ENCODE measurements at regions of chr9 and their contacts with region 1.

Region 1: GRCh38 chr9:120875954-120876841 is 790 bp downstream of the PHF19 start:
- DNase-seq: peak; percentile 95
- H3K4me3 ChIP-seq: peak overlapping the region; percentile 93
- H3K27ac ChIP-seq: peak overlapping the region; percentile 96
- H3K4me1 ChIP-seq: peaks cover 70% of the 10 kb centered on the region
- CTCF ChIP-seq: peak; percentile 58

Region 2: DNA sequence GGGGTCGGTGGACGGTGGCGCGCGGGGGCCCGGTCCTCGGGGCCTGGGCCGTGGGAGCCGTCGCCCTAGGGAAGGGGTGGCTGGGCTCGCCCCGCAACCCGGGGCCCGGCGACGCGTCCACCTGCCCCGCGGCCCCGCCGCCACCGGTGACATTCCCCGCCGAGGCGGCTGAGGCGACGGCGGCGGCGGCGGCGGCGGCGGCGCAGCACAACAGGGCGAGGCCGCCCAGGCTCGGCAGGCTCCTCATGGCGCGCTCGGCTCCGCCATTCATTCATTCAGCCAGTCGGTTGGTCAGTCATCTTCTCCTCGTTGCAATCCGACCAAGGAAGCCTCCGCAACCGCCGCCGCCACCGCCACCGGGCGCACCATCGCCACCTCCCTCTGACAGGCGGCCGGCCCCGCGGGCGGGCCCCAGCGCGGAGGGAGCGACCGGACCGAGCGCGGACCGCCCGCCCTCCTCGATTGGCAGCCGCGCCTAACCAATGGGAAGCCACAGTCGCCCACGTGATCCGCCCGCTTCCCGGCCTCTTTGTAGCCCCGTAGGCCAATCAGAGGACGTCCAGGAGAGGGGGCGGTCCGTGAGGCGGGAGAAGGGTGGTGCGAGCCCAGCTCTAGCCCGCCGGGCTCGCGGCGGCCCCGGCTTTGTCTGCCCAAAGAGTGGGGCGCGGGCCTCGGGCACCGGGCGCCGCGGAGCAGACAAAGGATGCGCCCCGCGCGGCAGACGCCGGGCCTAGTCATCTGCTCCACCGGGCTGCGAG is 161.9 kb before region 1 on chr9 and contains the start of gene MEGF9:
- CTCF ChIA-PET with region 1: no interaction called
- POLR2A ChIA-PET with region 1: no interaction called
- intact Hi-C with region 1: no loop called
- DNase-seq: peak; percentile 98
- H3K4me3 ChIP-seq: peak within 1 kb of the TSS; percentile 86
- H3K27ac ChIP-seq: peak within 1 kb of the TSS; percentile 33
- H3K4me1 ChIP-seq: peaks cover 38% of the 10 kb centered on the region
- CTCF ChIP-seq: no peak
- total RNA-seq, gene MEGF9: 4.8 and 5.1 TPM in 2 replicates

Region 3: DNA sequence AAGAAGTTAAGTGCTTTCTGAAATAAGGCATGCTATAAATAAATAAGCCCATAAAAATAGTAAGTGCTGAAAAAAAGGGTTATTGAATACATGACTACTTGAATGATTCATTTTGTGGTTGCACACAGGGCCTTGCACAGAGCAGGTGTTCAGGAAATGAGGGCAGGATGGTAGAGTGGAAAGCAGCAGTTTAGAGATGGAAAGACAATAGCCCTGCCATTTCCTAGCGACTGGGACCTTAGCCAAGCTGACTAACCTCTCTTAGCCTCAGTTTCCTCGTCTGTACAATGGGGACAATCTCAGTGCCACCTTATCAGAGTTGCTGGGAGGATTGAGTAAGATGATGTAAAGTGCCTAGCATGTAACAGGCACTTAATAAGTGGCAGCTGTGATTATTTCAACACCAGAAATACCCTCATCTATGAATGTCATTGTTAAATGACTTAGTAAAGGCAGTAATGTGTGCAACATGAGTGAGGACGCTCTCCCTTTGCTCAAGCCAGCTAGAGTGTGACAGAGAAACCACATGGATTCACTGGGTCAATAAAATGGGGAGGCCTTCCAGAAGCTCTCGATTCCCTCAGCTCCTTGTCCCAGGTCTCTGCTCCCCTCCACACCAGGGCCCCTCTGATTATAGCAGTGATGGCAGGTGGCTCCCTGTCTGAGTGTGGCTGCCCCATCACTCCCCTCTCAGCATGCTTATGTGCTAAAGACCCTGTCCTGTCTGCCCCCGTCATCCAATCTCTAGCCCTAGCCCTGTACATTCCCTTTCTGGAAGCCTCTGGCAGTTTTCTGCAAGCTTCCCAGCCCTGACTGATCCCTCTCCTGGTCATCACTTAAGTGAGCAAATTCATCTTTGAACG is 16.8 kb after region 1 on chr9:
- CTCF ChIA-PET with region 1: no interaction called
- POLR2A ChIA-PET with region 1: interaction called, 50 read pairs
- intact Hi-C with region 1: loop called (anchors 1 kb)
- DNase-seq: peak; percentile 97
- H3K4me3 ChIP-seq: peak overlapping the region; percentile 7
- H3K27ac ChIP-seq: peak overlapping the region; percentile 98
- H3K4me1 ChIP-seq: peaks cover 95% of the 10 kb centered on the region
- CTCF ChIP-seq: no peak

Region 4: GRCh38 chr9:120904061-120904977 is 28.1 kb after region 1 on chr9:
- CTCF ChIA-PET with region 1: interaction called, 3 read pairs
- POLR2A ChIA-PET with region 1: interaction called, 12 read pairs
- intact Hi-C with region 1: loop called (anchors 1 kb)
- DNase-seq: peak; percentile 89
- H3K4me3 ChIP-seq: peak overlapping the region; percentile 21
- H3K27ac ChIP-seq: peak overlapping the region; percentile 97
- H3K4me1 ChIP-seq: peaks cover 76% of the 10 kb centered on the region
- CTCF ChIP-seq: no peak

Region 5: GRCh38 chr9:120928483-120929228 is 52.5 kb after region 1 on chr9:
- CTCF ChIA-PET with region 1: no interaction called
- POLR2A ChIA-PET with region 1: interaction called, 7 read pairs
- intact Hi-C with region 1: loop called (anchors 1 kb)
- DNase-seq: peak; percentile 87
- H3K4me3 ChIP-seq: peak overlapping the region; percentile 74
- H3K27ac ChIP-seq: peak overlapping the region; percentile 96
- H3K4me1 ChIP-seq: peaks cover 97% of the 10 kb centered on the region
- CTCF ChIP-seq: no peak

Region 6: GRCh38 chr9:120936011-120936763 is 60.0 kb after region 1 on chr9:
- CTCF ChIA-PET with region 1: interaction called, 3 read pairs
- POLR2A ChIA-PET with region 1: interaction called, 7 read pairs
- intact Hi-C with region 1: loop called (anchors 1 kb)
- DNase-seq: peak; percentile 92
- H3K4me3 ChIP-seq: peak overlapping the region; percentile 49
- H3K27ac ChIP-seq: peak overlapping the region; percentile 96
- H3K4me1 ChIP-seq: peaks cover 81% of the 10 kb centered on the region
- CTCF ChIP-seq: peak; percentile 100

Region 7: DNA sequence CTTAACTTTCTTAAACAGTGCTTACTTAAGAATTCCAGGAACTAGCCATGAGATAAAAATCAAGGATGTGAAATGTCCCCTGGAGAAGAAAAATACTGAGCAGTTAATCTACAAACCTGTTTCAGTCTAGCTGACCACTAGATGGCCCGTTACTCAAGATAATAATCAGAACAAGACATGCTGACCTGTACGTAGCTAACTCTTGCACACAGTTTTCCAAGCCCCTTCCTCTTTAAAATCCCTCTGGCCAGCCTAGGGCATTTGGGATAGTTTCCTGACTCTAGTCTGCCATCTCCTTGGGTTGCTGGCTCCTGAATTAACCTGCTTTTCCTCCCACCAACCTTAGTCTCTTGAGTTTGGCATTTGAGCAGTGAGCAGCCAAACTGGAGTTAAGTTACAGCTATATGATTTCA is 109.6 kb after region 1 on chr9:
- CTCF ChIA-PET with region 1: no interaction called
- POLR2A ChIA-PET with region 1: no interaction called
- intact Hi-C with region 1: loop called (anchors 5 kb)
- DNase-seq: peak; percentile 76
- H3K4me3 ChIP-seq: no peak overlapping the region
- H3K27ac ChIP-seq: no peak overlapping the region
- H3K4me1 ChIP-seq: no peaks in the 10 kb centered on the region
- CTCF ChIP-seq: peak; percentile 89

Region 8: DNA sequence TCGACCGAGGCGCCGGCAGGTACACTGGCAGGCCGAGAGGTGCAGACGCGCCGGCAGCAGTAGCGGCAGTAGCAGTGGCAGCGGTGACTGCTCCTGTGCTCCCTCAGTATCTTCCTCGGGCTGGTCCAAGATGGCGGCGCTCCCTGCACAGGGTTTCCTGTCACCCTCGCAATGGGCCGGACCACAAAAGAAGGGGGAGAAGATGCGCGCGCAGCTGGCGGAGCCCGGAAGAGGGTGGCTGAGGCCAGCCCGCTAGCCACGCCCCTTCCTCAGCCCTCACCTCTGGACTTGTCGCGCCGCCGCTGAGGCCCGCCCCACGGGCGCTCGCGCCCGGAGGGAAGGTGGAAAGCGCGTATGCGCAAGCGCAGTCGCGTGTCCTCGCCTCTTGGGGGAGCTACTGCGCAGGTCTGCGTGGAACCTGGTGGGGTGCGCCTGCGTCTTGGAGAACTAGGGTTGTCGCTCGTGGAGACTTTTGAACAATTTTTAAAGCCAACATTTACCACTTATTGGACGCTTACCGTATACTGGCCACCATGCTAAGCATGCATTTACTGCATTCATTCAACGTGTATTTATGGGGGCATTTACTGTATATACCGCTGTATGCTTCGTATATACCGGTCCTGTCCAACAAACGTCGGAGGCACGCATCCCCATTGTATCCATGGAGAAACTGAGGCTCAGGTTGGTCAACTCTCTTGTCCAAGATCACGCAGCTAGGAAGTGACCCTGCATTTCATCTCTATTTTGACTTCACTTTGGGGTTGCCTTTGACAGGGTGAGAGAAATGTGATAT is 325.7 kb after region 1 on chr9 and contains the start of gene RAB14:
- CTCF ChIA-PET with region 1: no interaction called
- POLR2A ChIA-PET with region 1: no interaction called
- intact Hi-C with region 1: loop called (anchors 5 kb)
- DNase-seq: peak; percentile 99
- H3K4me3 ChIP-seq: peak within 1 kb of the TSS; percentile 99
- H3K27ac ChIP-seq: peak within 1 kb of the TSS; percentile 81
- H3K4me1 ChIP-seq: peaks cover 58% of the 10 kb centered on the region
- CTCF ChIP-seq: peak; percentile 83
- total RNA-seq, gene RAB14: 8.1 and 8.6 TPM in 2 replicates

Measured in OCI-LY7 (cell line).